Activated CD4-positive, alpha-beta memory T cell treated with anti-CD3 and anti-CD28 coated beads, Interleukin-2, amount 10 ng/mL, durations not matched to agents 7 days and 5 days (primary cell): ENCODE measurements at regions of chr1 and their contacts with region 1.

Region 1: DNA sequence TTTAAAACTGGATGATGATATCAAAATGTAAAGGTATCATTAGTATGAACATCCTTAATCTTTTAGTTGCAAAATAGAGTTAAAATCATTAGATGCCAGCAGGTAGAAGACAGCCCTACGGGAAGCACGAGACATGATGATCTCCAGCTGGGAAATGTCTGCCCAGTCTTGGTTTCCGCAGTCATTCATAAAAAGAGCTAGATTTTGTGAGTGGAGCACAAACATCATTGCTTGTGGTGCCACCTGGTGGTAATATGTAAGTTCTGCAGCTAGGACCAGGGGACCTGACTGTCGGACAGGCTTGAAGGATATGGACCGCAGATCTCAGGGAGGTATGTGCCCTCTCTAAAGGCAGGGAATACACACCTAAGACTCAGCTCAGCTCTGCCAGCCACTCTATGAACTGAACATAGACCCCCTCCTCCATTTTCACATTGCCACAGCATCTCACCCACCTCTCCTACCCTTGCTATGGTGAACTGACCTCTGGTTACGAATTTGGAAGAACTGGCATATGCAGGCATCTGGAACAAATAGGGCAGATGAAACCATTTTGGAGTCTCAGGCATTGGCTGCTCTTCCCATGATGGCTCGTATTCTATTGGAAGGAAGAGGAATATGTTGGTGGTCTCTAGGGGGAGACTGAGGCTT is 9.2 kb downstream of the FCMR start:
- DNase-seq: peak; percentile 69
- H3K4me3 Mint-ChIP-seq: no peak overlapping the region
- H3K27ac Mint-ChIP-seq: no peak overlapping the region
- H3K4me1 Mint-ChIP-seq: peaks cover 61% of the 10 kb centered on the region
- H3K27me3 Mint-ChIP-seq: no peaks in the 10 kb centered on the region

Region 2: GRCh38 chr1:206646504-206646903 is 266.1 kb before region 1 on chr1:
- CTCF ChIA-PET with region 1: no interaction called
- POLR2A ChIA-PET with region 1: no interaction called
- DNase-seq: no peak
- H3K4me3 Mint-ChIP-seq: no peak overlapping the region
- H3K27ac Mint-ChIP-seq: no peak overlapping the region
- H3K4me1 Mint-ChIP-seq: peaks cover 5% of the 10 kb centered on the region
- H3K27me3 Mint-ChIP-seq: no peaks in the 10 kb centered on the region

Region 3: DNA sequence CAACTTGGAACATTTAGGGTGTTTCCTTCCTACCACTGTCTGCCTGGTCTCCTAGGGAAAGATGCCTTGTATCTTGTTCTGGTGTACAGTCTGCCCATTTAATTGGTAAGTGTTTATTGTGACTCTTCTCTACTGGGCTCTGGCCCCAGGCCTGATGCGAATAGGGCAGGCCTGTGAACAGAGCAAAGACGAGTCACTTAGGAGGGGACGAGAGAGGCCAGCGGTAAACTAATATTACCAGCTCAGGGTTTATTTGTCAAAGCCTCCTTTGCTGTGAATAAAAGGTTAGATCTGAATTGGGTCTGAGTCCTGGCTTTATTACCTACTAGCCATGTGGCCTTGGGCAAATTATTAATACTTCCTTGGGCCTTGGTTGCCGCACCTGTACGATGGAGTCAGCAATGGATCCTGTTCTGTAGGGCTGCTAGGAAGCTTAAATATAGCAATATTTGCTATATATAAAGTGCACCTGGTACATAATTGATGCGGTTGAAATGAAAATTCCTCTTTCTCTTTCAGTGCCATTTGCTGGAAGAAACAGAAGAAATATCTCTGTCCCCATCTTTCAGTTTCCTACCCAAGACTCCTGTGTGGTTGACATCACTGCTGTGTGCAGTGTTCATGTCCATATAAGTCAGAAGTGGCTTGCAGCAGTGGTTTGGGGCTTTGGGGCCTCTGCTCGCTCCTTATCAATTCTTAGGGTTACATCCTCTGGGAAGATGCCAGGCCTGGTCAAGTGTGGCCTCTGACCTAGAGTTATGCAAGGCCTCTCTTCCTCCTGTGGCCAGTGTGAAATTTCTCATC is 195.5 kb before region 1 on chr1:
- CTCF ChIA-PET with region 1: interaction called, 20 read pairs
- POLR2A ChIA-PET with region 1: interaction called, 5 read pairs
- DNase-seq: peak; percentile 52
- H3K4me3 Mint-ChIP-seq: no peak overlapping the region
- H3K27ac Mint-ChIP-seq: peak overlapping the region; percentile 80
- H3K4me1 Mint-ChIP-seq: peaks cover 78% of the 10 kb centered on the region
- H3K27me3 Mint-ChIP-seq: no peaks in the 10 kb centered on the region

Region 4: DNA sequence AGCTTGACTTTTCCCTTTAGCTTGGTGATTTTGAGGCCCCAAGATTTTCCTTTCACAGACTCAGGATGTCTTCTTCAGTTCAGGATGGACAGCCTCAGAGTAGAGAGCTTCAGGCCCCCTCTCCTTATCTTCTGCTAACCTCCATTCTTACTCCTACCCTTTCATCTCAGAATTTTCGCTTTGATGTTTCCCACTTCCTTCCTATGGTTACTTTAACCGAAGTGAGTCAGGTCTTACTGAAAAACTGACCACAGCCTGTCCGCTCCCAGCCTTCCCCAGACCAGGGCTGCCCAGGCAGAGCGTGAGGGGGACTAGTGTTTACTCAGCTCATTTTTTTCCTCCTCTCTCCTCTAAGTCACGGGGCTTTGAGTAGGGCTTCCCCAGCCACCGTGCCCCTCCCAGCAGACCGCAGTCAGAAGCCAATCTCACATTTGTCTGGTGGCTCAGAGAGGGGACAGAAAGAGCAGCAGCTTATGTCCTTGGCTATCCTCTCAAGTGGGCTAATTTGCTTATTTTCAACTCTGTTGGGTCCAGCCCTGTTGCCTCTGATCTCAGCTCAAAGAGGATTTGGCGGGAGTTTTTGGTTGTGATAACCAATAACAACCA is 146.2 kb before region 1 on chr1:
- CTCF ChIA-PET with region 1: interaction called, 17 read pairs
- POLR2A ChIA-PET with region 1: interaction called, 3 read pairs
- DNase-seq: peak; percentile 85
- H3K4me3 Mint-ChIP-seq: peak overlapping the region; percentile 21
- H3K27ac Mint-ChIP-seq: peak overlapping the region; percentile 66
- H3K4me1 Mint-ChIP-seq: peaks cover 75% of the 10 kb centered on the region
- H3K27me3 Mint-ChIP-seq: peaks cover 19% of the 10 kb centered on the region

Region 5: GRCh38 chr1:206833106-206833680 is 79.4 kb before region 1 on chr1:
- CTCF ChIA-PET with region 1: interaction called, 12 read pairs
- POLR2A ChIA-PET with region 1: no interaction called
- DNase-seq: no peak
- H3K4me3 Mint-ChIP-seq: no peak overlapping the region
- H3K27ac Mint-ChIP-seq: no peak overlapping the region
- H3K4me1 Mint-ChIP-seq: peaks cover 45% of the 10 kb centered on the region
- H3K27me3 Mint-ChIP-seq: peaks cover 42% of the 10 kb centered on the region

Region 6: GRCh38 chr1:206895830-206896242 is 16.7 kb before region 1 on chr1:
- CTCF ChIA-PET with region 1: interaction called, 12 read pairs
- POLR2A ChIA-PET with region 1: interaction called, 6 read pairs
- DNase-seq: no peak
- H3K4me3 Mint-ChIP-seq: no peak overlapping the region
- H3K27ac Mint-ChIP-seq: no peak overlapping the region
- H3K4me1 Mint-ChIP-seq: peaks cover 22% of the 10 kb centered on the region
- H3K27me3 Mint-ChIP-seq: peaks cover 2% of the 10 kb centered on the region

Region 7: GRCh38 chr1:206982216-206982615 is 69.6 kb after region 1 on chr1:
- CTCF ChIA-PET with region 1: interaction called, 43 read pairs
- POLR2A ChIA-PET with region 1: no interaction called
- DNase-seq: peak; percentile 70
- H3K4me3 Mint-ChIP-seq: no peak overlapping the region
- H3K27ac Mint-ChIP-seq: no peak overlapping the region
- H3K4me1 Mint-ChIP-seq: no peaks in the 10 kb centered on the region
- H3K27me3 Mint-ChIP-seq: peaks cover 47% of the 10 kb centered on the region

Region 8: DNA sequence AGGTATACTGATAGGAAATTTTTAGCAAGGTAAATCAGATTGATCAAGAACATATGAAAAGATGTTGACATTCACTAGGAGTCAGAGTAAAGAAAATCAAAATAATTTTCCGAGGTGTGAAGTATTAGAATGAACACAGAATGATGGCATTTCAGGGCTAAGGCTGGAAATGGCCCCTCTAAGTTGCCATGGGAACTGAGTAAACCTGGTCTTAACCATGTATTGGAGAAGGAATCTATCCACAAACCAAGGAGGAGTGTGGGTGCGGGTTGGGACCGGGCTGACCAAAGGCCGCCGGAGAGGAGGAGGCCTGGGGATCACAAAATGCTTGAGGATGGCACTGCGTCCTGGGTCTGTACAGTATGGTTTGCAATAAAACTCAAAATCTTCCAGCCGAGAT is 462.3 kb after region 1 on chr1:
- CTCF ChIA-PET with region 1: no interaction called
- POLR2A ChIA-PET with region 1: no interaction called
- DNase-seq: no peak
- H3K4me3 Mint-ChIP-seq: no peak overlapping the region
- H3K27ac Mint-ChIP-seq: no peak overlapping the region
- H3K4me1 Mint-ChIP-seq: no peaks in the 10 kb centered on the region
- H3K27me3 Mint-ChIP-seq: peaks cover 10% of the 10 kb centered on the region